ENCODE measurements at regions of chr13 and their contacts with region 1.

Region 1: GRCh38 chr13:31424117-31424729 is 224.4 kb downstream of the B3GLCT start:
- DNase-seq: peak; percentile 77
- H3K27ac ChIP-seq: no peak overlapping the region
- CTCF ChIP-seq: peak; percentile 91

Region 2: GRCh38 chr13:31236211-31236786 is 187.9 kb before region 1 on chr13:
- CTCF ChIA-PET with region 1: interaction called, 36 read pairs
- POLR2A ChIA-PET with region 1: no interaction called
- DNase-seq: peak; percentile 24
- H3K27ac ChIP-seq: no peak overlapping the region
- CTCF ChIP-seq: peak; percentile 73

Region 3: DNA sequence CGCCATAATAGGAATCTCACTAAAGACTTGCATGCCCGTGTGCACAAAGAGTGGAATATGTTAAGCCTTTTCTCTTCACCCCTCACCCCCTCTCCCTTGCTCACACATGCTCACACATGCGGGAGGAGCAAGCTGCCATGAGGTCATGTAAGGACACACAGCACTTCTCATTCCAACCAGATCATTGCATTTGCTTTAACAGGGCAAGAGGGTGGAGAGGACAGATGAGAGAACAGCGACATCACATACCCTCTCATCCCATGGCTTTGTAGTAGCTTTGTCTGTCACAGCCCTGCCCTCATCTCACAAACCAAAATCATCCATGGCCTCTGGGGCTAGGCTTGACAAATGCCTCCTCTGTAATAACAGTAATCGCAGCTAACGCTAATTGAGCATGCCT is 461.8 kb after region 1 on chr13:
- CTCF ChIA-PET with region 1: no interaction called
- POLR2A ChIA-PET with region 1: no interaction called
- DNase-seq: no peak
- H3K27ac ChIP-seq: no peak overlapping the region
- CTCF ChIP-seq: no peak

Measured in RWPE1 (cell line).